Activated CD4-positive, alpha-beta T cell treated with anti-CD3 and anti-CD28 coated beads for 36 hours (primary cell): ENCODE measurements at regions of chr20 and their contacts with region 1.

Region 1: GRCh38 chr20:49338061-49338460 is 60.2 kb upstream of the ZNFX1 start:
- DNase-seq: no peak
- ATAC-seq: no peak
- H3K4me3 Mint-ChIP-seq: no peak overlapping the region
- H3K27ac Mint-ChIP-seq: no peak overlapping the region
- H3K4me1 Mint-ChIP-seq: no peaks in the 10 kb centered on the region
- H3K27me3 Mint-ChIP-seq: peaks cover 5% of the 10 kb centered on the region

Region 2: GRCh38 chr20:49384437-49385088 is 46.5 kb after region 1 on chr20:
- CTCF ChIA-PET with region 1: interaction called, 4 read pairs
- POLR2A ChIA-PET with region 1: no interaction called
- intact Hi-C with region 1: loop called in 1 of 2 experiments (anchors 1 kb)
- DNase-seq: peak; percentile 88
- ATAC-seq: peak; percentile 68
- H3K4me3 Mint-ChIP-seq: no peak overlapping the region
- H3K27ac Mint-ChIP-seq: no peak overlapping the region
- H3K4me1 Mint-ChIP-seq: no peaks in the 10 kb centered on the region
- H3K27me3 Mint-ChIP-seq: peaks cover 22% of the 10 kb centered on the region

Region 3: DNA sequence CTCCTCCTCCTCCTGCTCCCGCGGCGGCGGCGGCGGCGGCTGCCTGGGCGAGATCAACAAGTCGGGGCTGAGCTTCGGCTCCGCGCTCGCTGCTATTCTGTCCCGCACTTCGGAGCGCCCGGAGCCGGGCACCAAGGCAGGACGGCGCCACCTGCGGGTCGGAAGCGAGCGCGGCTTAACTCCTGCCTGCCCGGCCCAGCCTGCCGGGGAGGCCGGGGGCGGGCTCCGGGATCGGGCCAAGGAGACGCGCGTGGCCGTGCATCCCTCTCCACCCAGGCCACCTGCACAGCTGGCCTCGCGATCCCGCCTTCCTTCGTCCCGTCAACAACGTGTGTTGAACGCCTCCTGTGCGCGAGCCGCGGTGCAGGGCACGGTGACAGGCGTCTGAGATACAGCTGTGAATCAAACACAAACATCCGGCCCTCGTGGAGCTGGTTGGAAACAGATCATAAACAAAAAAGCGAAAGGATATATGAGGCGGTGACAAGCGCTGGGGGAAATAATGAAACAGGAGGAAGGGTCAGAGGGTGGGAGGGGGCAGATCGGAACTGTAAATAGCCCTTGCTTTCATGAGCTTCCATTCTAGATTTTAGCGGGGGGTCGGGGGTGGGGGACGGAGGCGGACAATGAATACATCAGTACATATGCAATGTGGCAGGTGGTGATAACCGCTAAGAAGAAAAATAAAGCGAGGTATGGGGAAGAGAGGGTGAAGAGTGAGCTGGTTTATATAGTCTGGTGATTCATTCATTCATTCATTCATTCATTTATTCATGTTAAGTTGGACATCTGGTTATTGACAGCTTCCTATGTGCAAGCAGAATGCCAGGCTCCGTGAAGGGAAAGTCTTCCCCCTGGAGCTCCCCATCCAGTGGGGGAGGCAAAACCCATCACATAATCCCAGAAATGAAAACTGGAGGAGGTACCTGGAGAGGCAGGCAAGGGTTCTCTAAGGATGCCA is 146.4 kb after region 1 on chr20:
- CTCF ChIA-PET with region 1: interaction called, 22 read pairs
- POLR2A ChIA-PET with region 1: no interaction called
- intact Hi-C with region 1: loop called (anchors 1 kb)
- DNase-seq: peak; percentile 87
- ATAC-seq: peak; percentile 95
- H3K4me3 Mint-ChIP-seq: peak overlapping the region; percentile 69
- H3K27ac Mint-ChIP-seq: peak overlapping the region; percentile 14
- H3K4me1 Mint-ChIP-seq: peaks cover 6% of the 10 kb centered on the region
- H3K27me3 Mint-ChIP-seq: peaks cover 53% of the 10 kb centered on the region

Region 4: GRCh38 chr20:49508435-49509199 is 170.6 kb after region 1 on chr20:
- CTCF ChIA-PET with region 1: interaction called, 4 read pairs
- POLR2A ChIA-PET with region 1: no interaction called
- intact Hi-C with region 1: loop called in 1 of 2 experiments (anchors 1 kb)
- DNase-seq: peak; percentile 8
- ATAC-seq: no peak
- H3K4me3 Mint-ChIP-seq: no peak overlapping the region
- H3K27ac Mint-ChIP-seq: no peak overlapping the region
- H3K4me1 Mint-ChIP-seq: peaks cover 2% of the 10 kb centered on the region
- H3K27me3 Mint-ChIP-seq: peaks cover 30% of the 10 kb centered on the region

Region 5: DNA sequence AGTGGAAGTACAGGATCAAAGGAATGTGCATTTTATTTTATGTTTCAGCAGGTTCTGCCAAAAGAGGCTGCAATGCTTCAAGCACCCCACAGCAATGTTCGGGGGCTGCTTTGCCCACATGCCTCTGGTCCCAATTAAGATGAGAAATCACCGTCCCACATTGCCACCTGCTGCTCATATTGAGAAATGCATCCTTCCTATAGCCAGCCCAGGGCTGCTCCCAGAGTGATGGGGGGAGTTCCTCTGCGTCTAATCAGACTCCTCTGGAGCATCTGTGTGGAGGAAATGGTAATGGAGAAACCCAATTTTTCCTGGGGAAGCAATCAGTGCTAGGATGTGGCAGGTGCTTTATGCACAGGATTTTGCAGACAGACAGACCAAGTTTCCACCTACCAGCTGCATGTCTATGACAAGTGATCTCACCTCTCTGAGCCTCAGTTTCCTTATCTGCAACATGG is 196.2 kb after region 1 on chr20:
- CTCF ChIA-PET with region 1: interaction called, 8 read pairs
- POLR2A ChIA-PET with region 1: no interaction called
- intact Hi-C with region 1: loop called (anchors 1 kb)
- DNase-seq: peak; percentile 79
- ATAC-seq: peak; percentile 74
- H3K4me3 Mint-ChIP-seq: no peak overlapping the region
- H3K27ac Mint-ChIP-seq: peak overlapping the region; percentile 65
- H3K4me1 Mint-ChIP-seq: peaks cover 15% of the 10 kb centered on the region
- H3K27me3 Mint-ChIP-seq: peaks cover 12% of the 10 kb centered on the region

Region 6: GRCh38 chr20:49846206-49846807 is 508.2 kb after region 1 on chr20:
- CTCF ChIA-PET with region 1: no interaction called
- POLR2A ChIA-PET with region 1: no interaction called
- intact Hi-C with region 1: loop called (anchors 10 kb)
- DNase-seq: peak; percentile 67
- ATAC-seq: peak; percentile 81
- H3K4me3 Mint-ChIP-seq: no peak overlapping the region
- H3K27ac Mint-ChIP-seq: no peak overlapping the region
- H3K4me1 Mint-ChIP-seq: peaks cover 7% of the 10 kb centered on the region
- H3K27me3 Mint-ChIP-seq: no peaks in the 10 kb centered on the region

Region 7: DNA sequence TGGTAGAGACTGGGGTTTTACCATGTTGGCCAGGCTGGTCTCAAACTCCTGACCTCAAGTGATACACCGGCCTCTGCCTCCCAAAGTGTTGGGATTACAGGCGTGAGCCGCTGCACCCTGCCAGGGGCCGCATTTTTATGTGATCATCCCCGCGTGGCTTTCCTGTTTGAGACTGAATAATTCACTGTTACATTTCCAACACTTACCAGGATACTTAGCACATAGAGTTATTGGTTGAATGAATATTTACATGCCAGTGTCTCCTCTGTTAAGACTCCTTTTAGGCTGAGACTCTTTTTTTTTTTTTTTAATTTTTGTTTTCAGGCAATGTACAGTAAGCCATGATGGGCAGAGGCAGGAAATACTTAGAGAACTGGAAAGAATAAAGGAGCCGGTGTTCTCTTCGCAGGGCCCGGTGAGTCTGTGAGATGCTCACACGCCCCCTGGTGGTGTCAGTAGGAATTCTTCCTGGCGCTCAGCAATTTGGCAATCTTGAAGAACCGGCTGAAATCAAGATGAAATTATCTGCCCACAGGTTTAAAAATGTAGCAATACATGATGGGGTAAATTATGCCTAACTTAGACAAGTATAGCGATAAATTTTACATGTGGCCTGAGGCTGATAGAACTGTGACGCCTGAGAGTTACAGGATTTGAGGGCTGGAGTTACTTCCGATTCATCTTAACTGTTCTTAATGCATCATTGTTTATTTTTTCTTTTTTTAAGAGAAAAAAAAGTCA is 590.5 kb after region 1 on chr20:
- CTCF ChIA-PET with region 1: no interaction called
- POLR2A ChIA-PET with region 1: no interaction called
- intact Hi-C with region 1: loop called in 1 of 2 experiments (anchors 10 kb)
- DNase-seq: peak; percentile 90
- ATAC-seq: peak; percentile 98
- H3K4me3 Mint-ChIP-seq: no peak overlapping the region
- H3K27ac Mint-ChIP-seq: peak overlapping the region; percentile 63
- H3K4me1 Mint-ChIP-seq: peaks cover 6% of the 10 kb centered on the region
- H3K27me3 Mint-ChIP-seq: peaks cover 2% of the 10 kb centered on the region